Heart left ventricle (tissue), 16 donors: ENCODE measurements at regions of chr12 and their contacts with region 1.

Region 1: DNA sequence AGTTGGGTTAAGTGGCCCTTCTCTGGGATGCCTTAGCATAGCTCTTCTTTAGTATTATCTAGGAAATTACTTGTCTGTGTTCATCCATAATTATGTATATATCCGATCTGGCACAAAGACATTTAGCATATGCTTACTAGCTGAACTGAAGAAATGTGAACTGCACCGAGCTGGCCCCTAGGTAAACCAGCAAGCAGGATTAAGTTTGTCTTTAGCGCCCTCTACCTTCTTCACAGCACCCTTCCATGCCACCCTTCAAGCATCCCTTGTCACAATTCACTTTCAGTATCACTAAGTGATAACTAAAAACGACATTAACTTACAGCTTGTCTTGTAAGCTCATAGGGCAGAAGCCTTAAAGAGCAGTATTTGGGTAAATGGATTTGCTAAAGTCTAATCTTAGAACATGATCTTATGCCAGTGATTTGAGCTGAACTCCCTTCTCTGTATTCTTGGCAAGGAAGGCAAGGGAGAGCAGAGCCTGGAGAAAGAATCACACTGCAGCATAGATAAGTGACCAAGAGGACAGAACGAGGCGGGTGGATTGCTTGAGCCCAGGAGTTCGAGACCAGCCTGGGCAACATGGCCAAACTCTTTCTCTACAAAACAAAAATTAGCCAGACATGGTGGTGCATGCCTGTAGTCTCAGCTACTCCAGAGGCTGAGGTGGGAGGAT is 2.6 kb upstream of the HAL start:
- DNase-seq: peak in 2 of 5 donors; percentile 27 to 30
- ATAC-seq: peak; percentile 63 to 92 (median 87)
- H3K4me3 ChIP-seq: no peak overlapping the region
- H3K27ac ChIP-seq: no peak overlapping the region
- H3K4me1 ChIP-seq: peaks cover 0 to 4% (median 0%) of the 10 kb centered on the region in 12 donors
- H3K27me3 ChIP-seq: no peaks in the 10 kb centered on the region
- CTCF ChIP-seq: peak; percentile 44 to 73 (median 66)
- POLR2A ChIP-seq: no peak

Region 2: DNA sequence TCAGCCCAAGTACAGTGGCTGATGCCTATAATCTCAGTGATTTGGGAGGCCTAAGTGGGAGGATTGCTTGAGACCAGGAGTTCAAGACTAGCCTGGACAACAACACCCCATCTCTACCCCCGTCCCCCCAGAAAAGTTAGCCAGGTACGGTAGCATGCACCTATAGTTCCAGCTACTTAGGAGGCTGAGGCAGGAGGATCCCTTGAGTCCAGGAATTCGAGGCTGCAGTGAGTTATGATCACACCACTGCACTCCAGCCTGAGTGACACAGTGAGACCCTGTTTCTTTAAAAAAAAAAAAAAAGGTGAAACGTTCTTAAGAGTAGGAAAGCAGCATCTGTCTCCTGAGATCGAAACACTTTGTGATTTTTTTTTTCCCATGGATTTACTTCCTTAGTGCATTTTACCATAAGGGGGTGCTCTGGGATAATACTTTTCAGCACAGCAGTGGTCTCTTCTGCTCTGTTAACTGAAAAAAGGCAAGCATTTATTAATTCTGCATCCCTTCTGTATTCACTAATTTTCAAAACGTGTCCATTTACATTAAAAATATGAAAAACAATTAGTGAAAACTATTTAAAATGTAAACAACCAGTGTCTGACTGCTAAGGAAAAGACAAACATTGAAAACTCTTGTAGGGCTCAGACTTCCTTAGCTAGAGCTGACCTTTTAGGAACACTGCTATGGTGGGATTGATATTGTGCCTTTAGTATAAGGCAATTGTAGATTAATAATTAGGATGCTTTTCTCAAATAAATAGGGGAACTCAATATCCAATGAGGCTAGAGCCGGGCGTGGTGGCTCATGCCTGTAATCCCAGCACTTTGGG is 416.3 kb before region 1 on chr12:
- intact Hi-C with region 1: loop called in 9 of 10 experiments (anchors 2 to 10 kb)
- DNase-seq: no peak
- ATAC-seq: peak; percentile 44 to 80 (median 59)
- H3K4me3 ChIP-seq: no peak overlapping the region
- H3K27ac ChIP-seq: no peak overlapping the region
- H3K4me1 ChIP-seq: no peaks in the 10 kb centered on the region
- H3K27me3 ChIP-seq: no peaks in the 10 kb centered on the region
- CTCF ChIP-seq: peak; percentile 35 to 81 (median 73)
- POLR2A ChIP-seq: no peak

Region 3: DNA sequence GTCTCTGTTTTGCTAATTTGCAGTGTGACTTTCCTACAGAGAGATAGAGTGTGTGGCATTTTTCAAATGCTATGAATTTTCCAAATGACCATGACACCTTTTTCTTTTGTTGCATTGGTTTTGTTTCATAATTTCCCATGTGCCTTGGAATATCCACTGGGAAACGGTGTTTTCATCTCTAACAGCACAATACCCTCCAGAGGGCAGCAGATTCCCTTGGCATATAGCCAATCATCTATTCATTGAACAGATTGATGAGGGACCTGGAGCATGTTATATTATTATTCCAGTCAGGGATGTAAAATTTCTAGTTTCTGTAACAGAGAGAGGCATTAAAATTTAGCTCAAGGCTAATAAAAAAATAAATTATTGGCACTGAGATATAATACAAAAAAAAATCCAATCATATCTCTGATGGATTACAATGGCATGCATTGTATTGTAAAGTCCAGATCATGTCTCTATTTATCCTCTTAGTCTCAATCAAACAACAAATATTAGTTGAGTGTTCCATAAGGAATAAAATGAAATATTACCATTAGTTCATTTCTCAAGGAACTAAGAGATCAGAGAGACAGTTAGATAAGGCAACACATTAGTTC is 178.5 kb before region 1 on chr12:
- intact Hi-C with region 1: loop called in 7 of 10 experiments (anchors 2 to 10 kb)
- DNase-seq: no peak
- ATAC-seq: peak in 1 of 4 donors; percentile 52
- H3K4me3 ChIP-seq: no peak overlapping the region
- H3K27ac ChIP-seq: no peak overlapping the region
- H3K4me1 ChIP-seq: no peaks in the 10 kb centered on the region
- H3K27me3 ChIP-seq: no peaks in the 10 kb centered on the region
- CTCF ChIP-seq: peak; percentile 23 to 70 (median 48)
- POLR2A ChIP-seq: no peak

Region 4: DNA sequence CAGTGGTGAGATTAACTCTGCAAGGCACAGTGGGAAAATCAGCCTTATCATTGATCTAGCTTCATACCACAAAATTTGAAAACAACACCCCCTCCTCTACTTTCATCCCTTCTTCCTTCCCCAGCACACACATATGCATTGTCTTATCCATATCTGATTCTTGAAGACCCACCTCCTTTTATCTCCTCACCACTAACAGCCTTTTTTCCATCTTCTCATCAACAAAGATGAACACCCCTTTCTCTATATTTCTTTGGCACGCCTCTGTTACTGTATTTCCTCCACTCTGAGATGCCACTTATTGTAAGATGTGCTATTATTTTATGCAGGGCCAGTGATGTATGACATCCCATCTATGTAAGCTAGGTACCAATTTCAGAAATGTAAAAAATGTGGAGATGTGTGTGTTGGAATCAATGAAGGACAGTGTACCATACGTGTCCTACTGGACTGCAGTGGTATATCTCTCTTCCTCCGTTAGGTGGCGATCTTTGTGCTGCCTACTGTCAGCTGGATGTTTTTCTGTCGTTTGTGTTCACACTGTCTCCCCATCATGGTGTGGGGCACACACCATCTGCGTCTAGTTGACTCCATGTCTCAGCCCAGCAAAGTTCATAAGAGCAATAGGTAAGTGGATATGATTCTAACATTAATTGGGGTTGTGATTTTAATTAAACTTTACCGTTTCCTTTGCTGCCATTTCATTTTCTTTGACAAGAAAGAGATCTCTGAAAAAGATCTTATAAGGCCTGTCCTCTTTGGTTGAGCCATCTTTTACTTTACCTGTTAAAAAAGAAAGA is 80.4 kb before region 1 on chr12:
- intact Hi-C with region 1: loop called (anchors 2 to 5 kb)
- DNase-seq: peak in 2 of 5 donors; percentile 15 to 27
- ATAC-seq: peak in 3 of 4 donors; percentile 74 to 83 (median 82)
- H3K4me3 ChIP-seq: no peak overlapping the region
- H3K27ac ChIP-seq: no peak overlapping the region
- H3K4me1 ChIP-seq: no peaks in the 10 kb centered on the region
- H3K27me3 ChIP-seq: no peaks in the 10 kb centered on the region
- CTCF ChIP-seq: peak; percentile 60 to 83 (median 74)
- POLR2A ChIP-seq: no peak